Mammary epithelial cell (primary cell): ENCODE measurements at regions of chr7 and their contacts with region 1.

Region 1: GRCh38 chr7:6306471-6306870 is 34.0 kb upstream of the CYTH3 start:
- DNase-seq: peak; percentile 80
- H3K4me3 ChIP-seq: no peak overlapping the region
- H3K27ac ChIP-seq: peak overlapping the region; percentile 38
- H3K4me1 ChIP-seq: peaks cover 12% of the 10 kb centered on the region
- H3K27me3 ChIP-seq: no peaks in the 10 kb centered on the region
- CTCF ChIP-seq: no peak

Region 2: DNA sequence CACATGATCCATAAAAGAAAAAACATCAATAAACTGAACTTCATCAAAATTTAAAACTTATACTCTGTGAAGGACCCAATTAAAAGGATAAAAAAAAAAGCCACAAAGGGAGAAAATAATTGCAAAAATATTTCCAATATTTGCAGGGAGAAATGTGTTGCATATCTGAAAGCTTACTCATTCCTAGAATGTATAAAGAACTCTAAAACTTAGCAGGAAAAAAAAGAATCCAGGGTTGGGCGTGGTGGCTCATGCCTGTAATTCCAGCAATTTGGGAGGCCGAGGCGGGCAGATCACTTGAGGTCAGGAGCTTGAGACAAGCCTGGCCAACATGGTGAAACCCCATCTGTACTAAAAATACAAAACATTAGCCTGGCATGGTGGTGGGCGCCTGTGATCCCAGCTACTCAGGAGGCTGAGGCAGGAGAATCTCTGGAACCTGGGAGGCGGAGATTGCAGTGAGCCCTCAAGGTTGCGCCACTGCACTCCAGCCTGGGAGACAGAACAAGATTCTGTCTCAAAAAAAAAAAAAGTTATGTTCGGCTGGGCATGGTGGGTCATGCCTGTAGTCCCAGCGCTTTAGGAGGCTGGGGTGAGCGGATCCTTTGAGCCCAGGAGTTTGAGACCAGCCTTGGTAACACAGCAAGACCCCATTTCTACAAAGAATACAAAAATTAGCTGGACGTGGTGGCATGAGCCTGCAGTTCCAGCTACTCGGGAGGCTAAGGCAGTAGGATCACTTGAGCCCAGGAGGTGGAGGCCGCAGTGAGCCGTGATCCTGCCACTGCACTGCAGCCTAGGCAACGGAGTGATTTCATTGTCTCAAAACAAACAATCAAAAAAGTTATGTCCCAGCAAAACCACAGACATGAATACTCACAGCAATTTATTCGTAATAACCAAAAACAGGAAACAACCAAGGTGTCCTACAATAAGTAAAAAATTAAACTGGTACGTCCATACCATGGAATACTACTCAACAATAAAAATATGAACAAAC is 22.8 kb before region 1 on chr7:
- CTCF ChIA-PET with region 1: no interaction called
- dilution Hi-C with region 1: no loop called
- in situ Hi-C with region 1: no loop called
- intact Hi-C with region 1: loop called (anchors 1 kb)
- DNase-seq: peak; percentile 52
- H3K4me3 ChIP-seq: no peak overlapping the region
- H3K27ac ChIP-seq: peak overlapping the region; percentile 98
- H3K4me1 ChIP-seq: peaks cover 25% of the 10 kb centered on the region
- H3K27me3 ChIP-seq: no peaks in the 10 kb centered on the region
- CTCF ChIP-seq: no peak